ENCODE measurements at regions of chr10 and their contacts with region 1.

Region 1: GRCh38 chr10:88810196-88810961 is 7.8 kb downstream of the LIPM start:
- DNase-seq: peak; percentile 69 to 78 (median 77)
- H3K4me3 ChIP-seq: no peak overlapping the region
- H3K27ac ChIP-seq: no peak overlapping the region
- H3K4me1 ChIP-seq: peaks cover 4 to 9% (median 6%) of the 10 kb centered on the region in 4 experiments
- H3K27me3 ChIP-seq: no peaks in the 10 kb centered on the region

Region 2: DNA sequence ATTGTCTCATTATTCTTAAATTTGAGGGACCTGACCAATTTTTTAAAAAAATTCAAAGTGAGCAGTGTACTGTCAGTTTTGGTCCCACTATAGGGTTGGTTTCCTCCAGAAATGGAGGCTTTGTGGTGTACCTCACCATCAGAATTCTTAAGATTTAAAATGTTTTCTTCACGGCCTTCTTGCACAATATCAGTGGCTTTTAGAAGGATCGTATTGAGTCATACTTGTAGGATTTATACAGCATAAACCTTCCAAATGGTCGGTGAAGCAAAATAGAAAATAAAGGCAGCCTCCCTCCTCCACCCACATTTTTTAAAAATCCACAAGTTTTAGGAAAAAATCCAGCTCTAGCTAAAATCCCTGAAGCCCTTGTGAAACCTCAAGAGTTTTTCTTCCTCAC is 353.6 kb before region 1 on chr10:
- CTCF ChIA-PET with region 1: no interaction called
- POLR2A ChIA-PET with region 1: interaction called, 11 read pairs
- DNase-seq: peak in 2 of 3 donors; percentile 22 to 34
- H3K4me3 ChIP-seq: no peak overlapping the region
- H3K27ac ChIP-seq: no peak overlapping the region
- H3K4me1 ChIP-seq: peaks cover 0 to 9% (median 6%) of the 10 kb centered on the region in 4 experiments
- H3K27me3 ChIP-seq: no peaks in the 10 kb centered on the region

Region 3: GRCh38 chr10:88693392-88694020 is 116.9 kb before region 1 on chr10:
- CTCF ChIA-PET with region 1: interaction called, 11 read pairs
- POLR2A ChIA-PET with region 1: no interaction called
- DNase-seq: peak; percentile 12 to 25 (median 18)
- H3K4me3 ChIP-seq: no peak overlapping the region
- H3K27ac ChIP-seq: no peak overlapping the region
- H3K4me1 ChIP-seq: no peaks in the 10 kb centered on the region
- H3K27me3 ChIP-seq: no peaks in the 10 kb centered on the region

Region 4: DNA sequence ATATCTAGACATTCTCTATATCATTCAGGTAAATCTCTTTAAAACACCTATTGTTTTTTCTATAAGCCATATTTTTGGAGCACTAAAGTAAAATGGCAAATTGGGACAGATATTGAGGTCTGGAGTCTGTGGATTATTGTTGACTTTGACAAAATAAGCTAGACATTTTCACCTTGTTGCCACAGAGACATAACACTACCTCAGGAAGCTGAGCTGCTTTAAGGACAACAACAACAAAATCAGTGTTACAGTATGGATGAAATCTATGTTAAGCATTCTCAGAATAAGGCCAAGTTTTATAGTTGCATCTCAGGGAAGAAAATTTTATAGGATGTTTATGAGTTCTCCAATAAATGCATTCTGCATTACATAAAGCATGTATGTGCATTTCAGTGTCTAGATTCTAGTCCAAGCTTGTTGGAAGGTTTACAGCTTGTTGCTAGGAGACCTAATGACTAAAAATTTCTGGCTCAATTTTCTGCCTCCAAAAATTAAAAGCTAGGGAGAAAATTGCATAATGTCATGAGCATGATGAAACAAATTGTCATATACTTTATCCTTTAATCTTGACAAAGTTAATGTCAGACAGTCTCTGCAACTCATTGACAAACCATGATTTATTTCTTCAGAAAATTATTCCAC is 10.5 kb after region 1 on chr10:
- CTCF ChIA-PET with region 1: interaction called, 15 read pairs
- POLR2A ChIA-PET with region 1: no interaction called
- DNase-seq: peak in 2 of 3 donors; percentile 28 to 31
- H3K4me3 ChIP-seq: no peak overlapping the region
- H3K27ac ChIP-seq: no peak overlapping the region
- H3K4me1 ChIP-seq: peaks cover 0 to 3% (median 0%) of the 10 kb centered on the region in 4 experiments
- H3K27me3 ChIP-seq: no peaks in the 10 kb centered on the region